AG04449 (cell line): ENCODE measurements at regions of chr4 and their contacts with region 1.

Region 1: GRCh38 chr4:163544407-163545038 is 50.0 kb downstream of the TMA16 start:
- DNase-seq: no peak
- H3K4me3 ChIP-seq: peak overlapping the region; percentile 48
- CTCF ChIP-seq: peak; percentile 95

Region 2: DNA sequence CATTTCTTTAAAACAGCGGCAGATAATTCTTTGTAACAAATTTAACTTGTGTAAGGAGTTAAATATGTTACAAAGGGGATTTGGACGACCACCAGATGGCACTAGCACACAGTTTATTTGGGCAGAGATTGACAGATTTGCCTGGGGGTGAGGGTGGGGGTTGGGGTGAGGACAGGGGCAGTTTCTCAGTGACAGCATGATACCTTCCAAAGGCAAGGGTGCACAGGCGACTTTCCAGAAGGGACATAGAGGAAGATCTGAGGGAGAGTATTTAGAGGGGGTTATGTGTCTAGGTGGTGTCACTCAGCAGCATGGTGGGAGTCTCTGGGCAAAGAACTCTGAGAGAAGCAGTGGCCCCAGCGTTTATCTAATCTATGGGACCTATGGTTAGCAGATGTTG is 59.6 kb before region 1 on chr4:
- CTCF ChIA-PET with region 1: interaction called, 202 read pairs
- POLR2A ChIA-PET with region 1: no interaction called
- DNase-seq: no peak
- H3K4me3 ChIP-seq: no peak overlapping the region
- CTCF ChIP-seq: peak; percentile 42

Region 3: DNA sequence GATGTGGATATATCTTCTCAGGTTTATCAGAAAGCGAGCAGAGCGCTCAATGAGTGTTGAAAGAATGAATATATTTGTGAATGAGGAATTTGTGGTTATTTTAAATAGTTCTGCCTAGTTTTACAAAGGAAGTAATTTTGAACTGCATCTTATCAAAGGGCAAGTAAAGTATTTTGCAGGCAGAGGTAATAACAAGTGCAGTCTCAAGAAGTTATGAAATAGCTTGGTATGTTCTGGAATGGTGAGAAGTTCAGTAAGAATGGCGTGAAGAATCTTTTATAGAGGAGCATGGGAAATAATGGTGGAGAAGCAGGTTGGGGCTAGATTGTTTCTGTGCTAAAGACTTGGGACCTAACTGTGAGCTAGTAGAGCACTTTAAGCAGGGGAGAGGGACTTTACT is 39.1 kb before region 1 on chr4:
- CTCF ChIA-PET with region 1: interaction called, 13 read pairs
- POLR2A ChIA-PET with region 1: no interaction called
- DNase-seq: no peak
- H3K4me3 ChIP-seq: no peak overlapping the region
- CTCF ChIP-seq: no peak

Region 4: GRCh38 chr4:163755013-163755412 is 210.5 kb after region 1 on chr4:
- CTCF ChIA-PET with region 1: interaction called, 162 read pairs
- POLR2A ChIA-PET with region 1: no interaction called
- DNase-seq: no peak
- H3K4me3 ChIP-seq: no peak overlapping the region
- CTCF ChIP-seq: no peak

Region 5: DNA sequence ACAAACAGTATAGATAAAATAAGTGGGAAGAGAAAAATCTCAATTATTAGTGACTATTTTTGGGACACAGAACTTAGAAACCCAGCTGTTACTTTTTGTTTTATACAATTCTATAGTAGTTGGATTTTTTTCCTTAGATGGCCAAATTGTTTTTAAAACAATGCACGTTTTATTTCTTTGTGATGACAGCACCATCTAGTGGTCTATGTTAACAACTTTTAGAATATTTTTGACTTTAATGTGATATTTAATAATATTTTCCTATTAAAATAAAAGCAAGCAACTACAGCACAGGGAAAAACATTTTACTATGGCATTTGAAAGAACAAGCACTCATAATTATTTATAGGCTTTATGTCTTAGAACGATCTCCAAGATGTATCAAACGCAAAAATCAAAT is 1203.9 kb after region 1 on chr4:
- CTCF ChIA-PET with region 1: interaction called, 58 read pairs
- POLR2A ChIA-PET with region 1: no interaction called
- DNase-seq: no peak
- H3K4me3 ChIP-seq: no peak overlapping the region
- CTCF ChIP-seq: no peak